Activated CD4-positive, alpha-beta T cell treated with anti-CD3 and anti-CD28 coated beads for 36 hours (primary cell): ENCODE measurements at regions of chr6 and their contacts with region 1.

Region 1: DNA sequence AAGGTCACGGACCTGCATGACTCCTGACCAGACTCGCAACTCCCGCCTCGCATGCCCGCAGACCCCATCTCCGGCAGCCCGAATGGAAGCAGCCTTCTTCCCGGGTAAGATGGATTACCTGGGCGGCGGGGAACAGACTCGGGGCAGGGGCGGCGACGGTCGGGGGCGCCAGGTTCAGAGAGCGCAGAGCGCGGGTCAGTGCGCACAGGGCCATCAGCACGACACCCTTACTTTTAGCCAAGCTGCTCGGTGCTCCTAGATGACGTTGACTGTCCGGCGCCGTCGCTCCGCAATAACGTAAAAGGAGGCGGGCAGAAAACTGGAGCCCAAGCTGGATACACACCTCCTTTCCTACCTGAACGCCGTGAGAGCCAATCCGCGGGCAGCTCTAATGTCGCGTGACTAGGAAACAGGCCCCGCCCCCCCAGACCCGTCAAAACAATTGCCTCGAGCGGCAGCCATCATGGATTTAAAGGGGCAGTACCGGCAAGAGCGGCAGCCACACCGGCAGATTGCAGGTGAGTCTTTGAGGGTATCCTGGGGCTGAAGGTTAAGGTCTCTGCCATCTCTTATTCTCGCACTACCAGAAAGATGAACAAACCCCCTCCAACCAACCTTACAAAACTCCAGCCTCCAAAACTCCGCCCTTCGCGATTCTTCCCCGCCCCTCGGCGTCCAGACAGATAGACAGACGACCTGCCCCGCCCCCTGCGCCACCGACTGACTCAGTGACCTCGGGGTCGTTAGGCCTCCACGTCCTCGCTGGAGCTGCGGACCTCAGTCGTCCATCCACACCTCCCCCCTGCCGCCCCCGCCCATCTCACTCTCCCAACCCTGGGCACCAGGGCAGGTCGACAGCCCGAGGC is at the starts of genes KLC4 and MRPL2:
- DNase-seq: peak; percentile 99
- ATAC-seq: peak; percentile 98
- H3K4me3 Mint-ChIP-seq: peak within 1 kb of the TSS; percentile 85
- H3K27ac Mint-ChIP-seq: peak within 1 kb of the TSS; percentile 94
- H3K4me1 Mint-ChIP-seq: peaks cover 27% of the 10 kb centered on the region
- H3K27me3 Mint-ChIP-seq: no peaks in the 10 kb centered on the region
- total RNA-seq, gene KLC4: 10.0 to 10.1 TPM
- total RNA-seq, gene MRPL2: 93.9 to 110 TPM

Region 2: DNA sequence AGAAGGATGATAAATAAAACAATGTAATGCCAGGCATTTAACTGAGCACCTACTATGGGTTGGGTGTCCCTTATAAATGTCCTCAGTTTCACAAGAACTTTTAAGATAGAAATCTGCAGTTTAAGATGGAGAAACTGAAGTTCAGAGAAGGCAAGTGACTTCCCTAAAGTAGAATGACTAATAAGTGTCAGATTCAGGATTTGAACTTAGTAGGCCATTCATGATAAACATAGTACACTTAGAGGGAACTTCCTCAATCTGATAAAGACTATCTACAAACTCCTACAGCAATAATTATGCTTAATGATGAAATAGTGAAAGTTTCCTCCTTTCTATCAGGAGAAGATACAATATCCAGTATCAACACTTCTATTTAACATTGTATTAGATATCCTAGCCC is 1680.1 kb before region 1 on chr6:
- CTCF ChIA-PET with region 1: no interaction called
- POLR2A ChIA-PET with region 1: no interaction called
- intact Hi-C with region 1: no loop called
- DNase-seq: no peak
- ATAC-seq: no peak
- H3K4me3 Mint-ChIP-seq: no peak overlapping the region
- H3K27ac Mint-ChIP-seq: no peak overlapping the region
- H3K4me1 Mint-ChIP-seq: peaks cover 9% of the 10 kb centered on the region
- H3K27me3 Mint-ChIP-seq: peaks cover 48% of the 10 kb centered on the region

Region 3: DNA sequence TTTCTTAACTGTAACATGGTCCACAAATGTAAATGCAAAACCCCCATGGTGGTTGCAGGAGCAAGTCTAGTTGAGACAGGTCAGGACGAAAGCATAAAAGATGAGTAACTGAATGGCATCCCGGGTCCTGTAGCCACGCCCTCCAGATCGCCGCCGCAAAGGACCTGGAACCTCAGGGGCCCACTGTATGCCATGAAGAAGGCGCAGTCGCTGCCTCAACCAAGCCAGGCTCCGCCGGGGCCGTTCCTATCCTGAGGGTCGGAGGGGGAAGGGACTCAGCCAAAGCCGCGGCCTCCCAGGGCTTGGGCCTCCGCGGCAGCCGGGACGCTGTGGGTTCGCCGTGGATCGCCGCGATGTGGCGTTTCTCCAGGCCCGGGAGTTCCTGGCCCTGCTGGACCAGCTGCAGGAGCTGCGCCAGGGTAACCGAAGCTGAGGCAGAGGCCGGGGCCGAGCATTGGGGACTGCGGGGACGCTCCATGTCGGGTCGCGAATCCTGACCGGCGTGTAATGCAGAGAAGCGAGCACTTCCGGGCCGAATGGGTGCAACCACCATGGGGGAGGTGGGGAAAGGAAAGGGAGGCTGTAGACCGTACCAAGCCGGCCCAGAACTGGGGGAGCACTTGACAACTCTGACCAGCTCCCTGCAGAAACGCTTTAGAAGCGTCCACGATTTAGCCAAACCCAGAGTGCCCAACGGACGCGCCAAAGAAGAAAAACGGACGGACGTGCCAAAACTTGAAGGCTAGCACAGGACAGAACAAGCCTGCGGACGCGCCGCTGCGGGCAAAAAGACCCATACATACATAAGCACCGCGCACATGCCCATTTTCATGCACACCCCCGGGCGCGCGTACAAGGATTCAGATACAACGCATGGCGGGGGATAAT is 168.8 kb before region 1 on chr6:
- CTCF ChIA-PET with region 1: no interaction called
- POLR2A ChIA-PET with region 1: no interaction called
- intact Hi-C with region 1: loop called in 1 of 2 experiments (anchors 1 kb)
- DNase-seq: peak; percentile 95
- ATAC-seq: peak; percentile 89
- H3K4me3 Mint-ChIP-seq: peak overlapping the region; percentile 90
- H3K27ac Mint-ChIP-seq: peak overlapping the region; percentile 98
- H3K4me1 Mint-ChIP-seq: peaks cover 31% of the 10 kb centered on the region
- H3K27me3 Mint-ChIP-seq: no peaks in the 10 kb centered on the region

Region 4: GRCh38 chr6:43021270-43022047 is 37.9 kb before region 1 on chr6 and contains the start of gene RRP36:
- CTCF ChIA-PET with region 1: interaction called, 5 read pairs
- POLR2A ChIA-PET with region 1: interaction called, 3 read pairs
- intact Hi-C with region 1: loop called in 1 of 2 experiments (anchors 1 kb)
- DNase-seq: peak; percentile 83
- ATAC-seq: peak; percentile 84
- H3K4me3 Mint-ChIP-seq: peak within 1 kb of the TSS; percentile 93
- H3K27ac Mint-ChIP-seq: peak within 1 kb of the TSS; percentile 88
- H3K4me1 Mint-ChIP-seq: peaks cover 32% of the 10 kb centered on the region
- H3K27me3 Mint-ChIP-seq: no peaks in the 10 kb centered on the region
- total RNA-seq, gene RRP36: 45.8 to 48.1 TPM

Region 5: DNA sequence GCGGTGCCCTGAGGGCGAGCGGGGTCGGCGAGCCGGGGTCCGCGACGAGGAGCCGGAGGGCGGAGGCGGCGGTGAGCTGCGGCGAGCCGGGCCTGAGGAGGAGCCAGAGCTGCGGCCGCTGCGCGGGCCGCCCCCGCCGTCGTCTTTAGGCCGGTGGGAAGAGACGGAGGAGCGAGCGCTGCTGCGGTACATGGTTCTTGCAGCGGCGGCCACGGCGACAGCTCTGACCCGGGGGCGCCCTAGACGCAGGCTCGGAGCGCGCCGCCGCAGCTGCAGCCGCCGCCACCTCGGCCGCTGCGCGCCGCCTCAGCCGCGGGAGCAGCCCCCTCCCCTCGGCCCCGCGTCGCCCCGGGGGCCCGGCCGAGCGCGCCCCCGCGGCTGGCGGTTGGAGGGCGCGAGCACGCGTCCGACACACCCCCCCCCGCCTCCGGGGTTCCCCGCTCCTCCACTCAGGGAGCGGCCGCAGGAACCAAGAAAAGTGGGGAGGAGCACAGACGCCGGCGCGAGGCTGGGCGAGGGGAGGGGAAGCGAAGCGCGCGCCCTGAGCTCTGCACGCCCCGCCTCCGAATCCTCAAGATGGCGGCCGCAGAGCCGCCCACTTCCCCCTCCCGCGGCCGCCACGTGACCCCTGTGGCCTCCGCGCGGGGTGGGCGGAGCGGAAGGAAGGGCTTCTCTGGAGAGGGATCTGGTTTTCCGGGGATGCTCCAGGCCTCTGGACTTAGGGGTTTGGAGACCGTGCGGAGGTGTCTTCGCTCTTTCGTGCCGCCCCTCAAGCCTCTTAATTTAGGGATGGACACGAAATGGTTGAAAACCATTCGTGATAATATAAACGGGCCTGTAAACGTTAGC is 310.0 kb after region 1 on chr6 and contains the start of gene ZNF318:
- CTCF ChIA-PET with region 1: no interaction called
- POLR2A ChIA-PET with region 1: no interaction called
- intact Hi-C with region 1: loop called in 1 of 2 experiments (anchors 1 kb)
- DNase-seq: peak; percentile 97
- ATAC-seq: peak; percentile 97
- H3K4me3 Mint-ChIP-seq: peak within 1 kb of the TSS; percentile 86
- H3K27ac Mint-ChIP-seq: peak within 1 kb of the TSS; percentile 95
- H3K4me1 Mint-ChIP-seq: peaks cover 37% of the 10 kb centered on the region
- H3K27me3 Mint-ChIP-seq: no peaks in the 10 kb centered on the region
- total RNA-seq, gene ZNF318: 11.2 to 12.9 TPM

Region 6: DNA sequence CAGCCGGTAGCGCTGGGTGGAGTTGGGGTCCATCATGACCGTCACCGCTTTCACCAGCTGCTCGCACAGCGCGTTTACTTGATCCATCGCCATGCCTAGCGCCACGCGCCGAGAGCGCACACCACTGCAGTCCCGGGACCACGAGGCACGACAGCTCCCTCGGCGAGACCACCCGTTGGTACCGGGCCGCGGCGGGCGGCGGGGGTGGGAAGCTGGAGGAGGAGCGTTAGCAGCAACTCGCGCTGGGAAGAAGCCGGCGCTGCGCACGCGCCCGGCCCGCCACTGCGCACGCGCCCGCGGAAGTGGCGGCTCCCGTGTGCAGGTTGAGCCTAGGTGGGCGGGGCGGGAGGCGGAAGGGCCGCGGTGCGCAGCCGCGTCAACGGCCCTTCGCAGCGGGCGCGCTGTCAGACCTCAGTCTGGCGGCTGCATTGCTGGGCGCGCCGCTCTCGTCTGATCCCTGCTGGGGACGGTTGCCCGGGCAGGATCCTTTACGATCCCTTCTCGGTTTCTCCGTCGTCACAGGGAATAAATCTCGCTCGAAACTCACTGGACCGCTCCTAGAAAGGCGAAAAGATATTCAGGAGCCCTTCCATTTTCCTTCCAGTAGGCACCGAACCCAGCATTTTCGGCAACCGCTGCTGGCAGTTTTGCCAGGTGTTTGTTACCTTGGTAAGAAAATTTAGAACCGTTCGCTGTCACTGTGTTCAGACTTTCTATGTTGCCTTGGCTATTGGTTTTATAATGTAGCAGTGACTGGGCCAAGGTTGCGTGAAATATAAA is 516.6 kb after region 1 on chr6 and contains the starts of genes POLH and XPO5:
- CTCF ChIA-PET with region 1: no interaction called
- POLR2A ChIA-PET with region 1: no interaction called
- intact Hi-C with region 1: loop called in 1 of 2 experiments (anchors 10 kb)
- DNase-seq: peak; percentile 95
- ATAC-seq: peak; percentile 91
- H3K4me3 Mint-ChIP-seq: peak within 1 kb of the TSS; percentile 90
- H3K27ac Mint-ChIP-seq: peak within 1 kb of the TSS; percentile 86
- H3K4me1 Mint-ChIP-seq: peaks cover 44% of the 10 kb centered on the region
- H3K27me3 Mint-ChIP-seq: no peaks in the 10 kb centered on the region
- total RNA-seq, gene POLH: 35.2 to 37.9 TPM
- total RNA-seq, gene XPO5: 108 to 109 TPM